ENCODE measurements at regions of chr4 and their contacts with region 1.

Region 1: GRCh38 chr4:164012396-164013027 is 518.0 kb downstream of the TMA16 start:
- DNase-seq: peak; percentile 48 to 66
- H3K4me3 ChIP-seq: no peak overlapping the region
- H3K27ac ChIP-seq: no peak overlapping the region
- H3K4me1 ChIP-seq: no peaks in the 10 kb centered on the region
- H3K27me3 ChIP-seq: no peaks in the 10 kb centered on the region
- CTCF ChIP-seq: peak in 5 of 7 experiments; percentile 18 to 65 (median 24)
- EP300 ChIP-seq: no peak
- POLR2A ChIP-seq: no peak

Region 2: GRCh38 chr4:163554870-163555465 is 457.5 kb before region 1 on chr4:
- intact Hi-C with region 1: loop called (anchors 10 kb)
- DNase-seq: peak in 1 of 2 donors; percentile 48
- H3K4me3 ChIP-seq: no peak overlapping the region
- H3K27ac ChIP-seq: no peak overlapping the region
- H3K4me1 ChIP-seq: peaks cover 6 to 27% (median 11%) of the 10 kb centered on the region in 4 donors
- H3K27me3 ChIP-seq: no peaks in the 10 kb centered on the region
- CTCF ChIP-seq: peak in 5 of 7 experiments; percentile 39 to 70 (median 55)
- EP300 ChIP-seq: no peak
- POLR2A ChIP-seq: no peak

Region 3: GRCh38 chr4:163930086-163930485 is 82.4 kb before region 1 on chr4:
- intact Hi-C with region 1: no loop called
- DNase-seq: no peak
- H3K4me3 ChIP-seq: no peak overlapping the region
- H3K27ac ChIP-seq: no peak overlapping the region
- H3K4me1 ChIP-seq: no peaks in the 10 kb centered on the region
- H3K27me3 ChIP-seq: no peaks in the 10 kb centered on the region
- CTCF ChIP-seq: no peak
- EP300 ChIP-seq: no peak
- POLR2A ChIP-seq: no peak

Measured in stomach (tissue), 19 donors.